ENCODE measurements at regions of chr4 and their contacts with region 1.

Region 1: GRCh38 chr4:108030332-108030731 is 40.6 kb downstream of the HADH start:
- DNase-seq: peak; percentile 30 to 85 (median 78)
- ATAC-seq: peak; percentile 91
- H3K4me3 ChIP-seq: no peak overlapping the region
- H3K4me3 Mint-ChIP-seq: peak overlapping the region; percentile 70 to 84 (median 76)
- H3K27ac ChIP-seq: peak overlapping the region; percentile 61
- H3K27ac Mint-ChIP-seq: peak overlapping the region; percentile 86 to 96 (median 94)
- H3K4me1 ChIP-seq: peaks cover 9 to 53% of the 10 kb centered on the region in 2 donors
- H3K4me1 Mint-ChIP-seq: peaks cover 28 to 77% (median 66%) of the 10 kb centered on the region in 7 donors
- H3K27me3 ChIP-seq: no peaks in the 10 kb centered on the region
- H3K27me3 Mint-ChIP-seq: no peaks in the 10 kb centered on the region

Region 2: DNA sequence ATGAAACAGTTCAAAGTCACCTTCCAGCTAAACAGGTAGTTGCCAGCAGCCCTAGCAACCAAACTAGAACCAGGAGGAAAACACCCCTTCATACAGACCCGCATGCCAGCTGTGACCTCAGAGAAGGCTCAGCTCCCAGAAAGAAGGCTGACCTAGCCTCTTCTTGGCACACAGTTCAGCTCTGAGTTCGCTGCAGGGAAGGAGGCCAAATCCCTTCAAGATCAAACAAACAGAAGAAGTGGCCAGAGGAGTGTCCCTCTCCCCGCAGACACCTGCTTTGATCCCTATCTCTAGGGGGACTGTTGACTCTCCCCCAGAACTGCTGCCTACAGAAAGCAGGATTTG is 15.3 kb after region 1 on chr4:
- CTCF ChIA-PET with region 1: interaction called, 18 read pairs
- POLR2A ChIA-PET with region 1: interaction called, 19 read pairs
- intact Hi-C with region 1: loop called (anchors 1 to 2 kb)
- DNase-seq: peak in 4 of 9 donors; percentile 47 to 67 (median 60)
- ATAC-seq: peak; percentile 54
- H3K4me3 ChIP-seq: no peak overlapping the region
- H3K4me3 Mint-ChIP-seq: peak overlapping the region in 6 of 10 donors; percentile 15 to 69 (median 53)
- H3K27ac ChIP-seq: peak overlapping the region; percentile 71
- H3K27ac Mint-ChIP-seq: peak overlapping the region; percentile 46 to 99 (median 89)
- H3K4me1 ChIP-seq: peaks cover 10 to 57% of the 10 kb centered on the region in 2 donors
- H3K4me1 Mint-ChIP-seq: peaks cover 31 to 80% (median 73%) of the 10 kb centered on the region in 7 donors
- H3K27me3 ChIP-seq: no peaks in the 10 kb centered on the region
- H3K27me3 Mint-ChIP-seq: no peaks in the 10 kb centered on the region

Region 3: DNA sequence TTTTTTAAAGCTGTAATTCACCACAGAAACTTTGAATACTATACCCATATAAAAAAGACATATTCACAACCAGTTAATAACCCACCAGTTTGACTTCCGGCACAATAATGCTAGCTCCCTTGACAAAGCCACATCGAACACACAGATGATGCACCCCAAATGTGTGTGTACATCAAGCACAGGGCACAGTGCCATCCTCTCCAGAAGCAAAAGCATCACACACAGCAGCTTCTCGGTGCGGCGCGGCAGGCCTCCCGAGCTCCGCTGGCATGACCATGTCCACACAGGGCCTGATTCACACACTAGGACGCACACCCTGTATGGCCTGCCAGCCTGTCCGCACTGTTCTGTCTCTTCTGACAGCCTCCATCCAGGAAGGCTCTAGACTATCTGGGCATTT is 50.4 kb after region 1 on chr4:
- CTCF ChIA-PET with region 1: interaction called, 11 read pairs
- POLR2A ChIA-PET with region 1: interaction called, 11 read pairs
- intact Hi-C with region 1: loop called in 1 of 2 experiments (anchors 2 kb)
- DNase-seq: peak in 8 of 9 donors; percentile 21 to 85 (median 78)
- ATAC-seq: peak; percentile 90
- H3K4me3 ChIP-seq: peak overlapping the region; percentile 3
- H3K4me3 Mint-ChIP-seq: peak overlapping the region; percentile 75 to 89 (median 82)
- H3K27ac ChIP-seq: peak overlapping the region; percentile 71
- H3K27ac Mint-ChIP-seq: peak overlapping the region; percentile 83 to 98 (median 95)
- H3K4me1 ChIP-seq: peaks cover 0 to 53% of the 10 kb centered on the region in 2 donors
- H3K4me1 Mint-ChIP-seq: peaks cover 24 to 90% (median 75%) of the 10 kb centered on the region in 7 donors
- H3K27me3 ChIP-seq: no peaks in the 10 kb centered on the region
- H3K27me3 Mint-ChIP-seq: no peaks in the 10 kb centered on the region

Region 4: DNA sequence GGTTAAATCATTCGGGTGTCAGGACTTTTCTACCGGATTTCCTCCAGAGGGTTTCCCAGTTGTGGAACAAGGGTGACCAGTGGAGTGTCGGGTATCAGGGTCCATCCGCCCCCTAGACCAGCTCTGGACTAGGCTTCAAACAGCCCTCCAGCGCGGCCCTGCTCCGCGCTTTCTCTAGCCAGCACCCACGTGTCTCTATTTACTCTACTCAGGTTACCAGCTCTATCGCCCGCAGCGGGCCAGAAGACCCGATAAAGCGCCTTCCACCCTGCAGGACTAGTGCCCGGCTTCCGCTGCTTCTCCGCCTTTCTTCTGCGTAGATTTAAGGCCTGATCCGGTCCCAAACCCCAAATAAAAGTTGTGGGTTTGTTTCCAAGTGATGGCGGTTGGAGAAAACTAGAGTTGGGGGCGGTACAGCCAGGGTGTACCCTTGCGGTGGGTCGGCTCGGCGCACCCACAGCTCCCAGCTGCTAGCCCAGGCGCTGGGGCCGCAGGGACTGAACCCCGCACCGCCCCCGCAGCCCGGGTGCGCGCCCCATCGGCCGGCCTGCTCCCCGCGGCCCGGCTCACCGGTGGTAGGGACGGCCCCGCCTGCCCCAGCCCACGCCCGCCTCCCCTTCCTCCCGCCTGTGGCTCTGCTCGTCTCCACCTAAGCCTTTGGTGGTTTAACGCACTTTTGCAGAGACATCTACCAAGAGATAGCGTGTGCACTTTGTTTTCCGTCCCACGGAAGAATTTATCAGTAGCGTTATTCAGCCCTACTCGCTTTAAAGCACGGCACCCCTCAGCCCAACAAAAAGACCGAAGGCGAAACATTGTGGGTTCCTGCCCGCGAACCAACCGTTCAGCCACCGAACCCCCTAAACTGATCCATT is 136.3 kb after region 1 on chr4:
- CTCF ChIA-PET with region 1: interaction called, 24 read pairs
- POLR2A ChIA-PET with region 1: interaction called, 120 read pairs
- intact Hi-C with region 1: loop called (anchors 1 kb)
- DNase-seq: peak; percentile 38 to 89 (median 70)
- ATAC-seq: peak; percentile 41
- H3K4me3 ChIP-seq: peak overlapping the region; percentile 77
- H3K4me3 Mint-ChIP-seq: peak overlapping the region; percentile 89 to 100 (median 98)
- H3K27ac ChIP-seq: peak overlapping the region; percentile 87
- H3K27ac Mint-ChIP-seq: peak overlapping the region; percentile 90 to 98 (median 97)
- H3K4me1 ChIP-seq: peaks cover 8 to 13% of the 10 kb centered on the region in 2 donors
- H3K4me1 Mint-ChIP-seq: peaks cover 13 to 46% (median 25%) of the 10 kb centered on the region in 7 donors
- H3K27me3 ChIP-seq: no peaks in the 10 kb centered on the region
- H3K27me3 Mint-ChIP-seq: peaks cover 0 to 33% (median 0%) of the 10 kb centered on the region in 5 donors

Region 5: GRCh38 chr4:108473221-108473620 is 442.9 kb after region 1 on chr4:
- CTCF ChIA-PET with region 1: interaction called, 3 read pairs
- POLR2A ChIA-PET with region 1: no interaction called
- intact Hi-C with region 1: loop called in 1 of 2 experiments (anchors 1 kb)
- DNase-seq: peak in 4 of 9 donors; percentile 17 to 43 (median 22)
- ATAC-seq: peak; percentile 40
- H3K4me3 ChIP-seq: no peak overlapping the region
- H3K4me3 Mint-ChIP-seq: no peak overlapping the region
- H3K27ac ChIP-seq: no peak overlapping the region
- H3K27ac Mint-ChIP-seq: peak overlapping the region in 2 of 9 donors; percentile 25 to 31
- H3K4me1 ChIP-seq: peaks cover 0 to 7% of the 10 kb centered on the region in 2 donors
- H3K4me1 Mint-ChIP-seq: peaks cover 11 to 65% (median 58%) of the 10 kb centered on the region in 7 donors
- H3K27me3 ChIP-seq: no peaks in the 10 kb centered on the region
- H3K27me3 Mint-ChIP-seq: no peaks in the 10 kb centered on the region

Region 6: GRCh38 chr4:108620101-108620932 is 590.0 kb after region 1 on chr4 and contains the start of gene RPL34:
- CTCF ChIA-PET with region 1: no interaction called
- POLR2A ChIA-PET with region 1: interaction called, 8 read pairs
- intact Hi-C with region 1: loop called in 1 of 2 experiments (anchors 5 kb)
- DNase-seq: peak; percentile 85 to 99 (median 96)
- ATAC-seq: peak; percentile 100
- H3K4me3 ChIP-seq: peak within 1 kb of the TSS; percentile 98
- H3K4me3 Mint-ChIP-seq: peak within 1 kb of the TSS; percentile 87 to 99 (median 96)
- H3K27ac ChIP-seq: peak within 1 kb of the TSS; percentile 90
- H3K27ac Mint-ChIP-seq: peak within 1 kb of the TSS; percentile 95 to 99 (median 97)
- H3K4me1 ChIP-seq: peaks cover 29 to 30% of the 10 kb centered on the region in 2 donors
- H3K4me1 Mint-ChIP-seq: peaks cover 33 to 81% (median 66%) of the 10 kb centered on the region in 7 donors
- H3K27me3 ChIP-seq: no peaks in the 10 kb centered on the region
- H3K27me3 Mint-ChIP-seq: peaks cover 0 to 3% (median 0%) of the 10 kb centered on the region in 5 donors
- total RNA-seq, gene RPL34: 1,411 to 3,442 (median 3,215) TPM